ENCODE measurements at regions of chr3 and their contacts with region 1.

Region 1: DNA sequence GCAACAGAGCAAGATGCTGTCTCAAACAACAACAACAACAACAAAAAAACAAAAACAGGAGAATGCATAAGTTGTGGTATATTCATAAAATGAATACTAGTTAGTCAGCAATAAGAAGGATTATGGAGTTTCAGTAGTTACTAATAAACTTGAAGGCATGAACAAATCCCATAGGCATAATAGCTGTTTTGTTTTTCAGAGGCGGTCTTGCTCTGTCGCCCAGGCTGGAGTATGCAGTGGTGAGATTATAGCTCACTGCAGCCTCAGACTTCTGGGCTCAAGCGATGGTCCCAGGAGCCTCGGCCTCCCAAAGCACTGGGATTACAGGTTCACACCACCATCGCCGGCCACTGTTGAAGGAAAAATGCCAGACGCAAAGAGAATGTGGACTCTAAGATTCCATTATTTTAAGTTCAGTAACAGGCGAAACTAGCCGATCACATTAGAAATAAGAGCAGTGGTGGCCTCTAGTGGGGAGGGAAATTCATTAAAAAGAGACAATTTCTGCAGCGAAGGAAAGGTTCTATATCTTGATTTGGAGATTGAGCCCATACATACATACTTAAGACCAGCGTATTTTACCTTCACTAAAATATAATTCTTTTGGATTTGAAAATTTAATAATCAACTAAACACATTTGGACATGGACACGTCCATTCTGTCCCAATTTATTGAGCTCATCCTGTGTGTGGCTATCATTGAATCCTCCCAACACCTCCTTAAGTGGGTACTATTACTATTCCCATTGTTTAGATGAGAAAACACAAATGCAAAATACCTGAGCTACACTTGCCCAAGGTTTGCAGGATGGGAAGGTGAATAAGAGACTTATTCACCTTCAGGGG is 27.4 kb upstream of the HDAC11 start:
- DNase-seq: peak; percentile 85
- H3K4me3 Mint-ChIP-seq: peak overlapping the region; percentile 95
- H3K27ac Mint-ChIP-seq: peak overlapping the region; percentile 20
- H3K4me1 Mint-ChIP-seq: peaks cover 18% of the 10 kb centered on the region
- H3K27me3 Mint-ChIP-seq: no peaks in the 10 kb centered on the region

Region 2: GRCh38 chr3:12708584-12709192 is 744.0 kb before region 1 on chr3:
- intact Hi-C with region 1: no loop called
- DNase-seq: no peak
- H3K4me3 Mint-ChIP-seq: no peak overlapping the region
- H3K27ac Mint-ChIP-seq: no peak overlapping the region
- H3K4me1 Mint-ChIP-seq: no peaks in the 10 kb centered on the region
- H3K27me3 Mint-ChIP-seq: peaks cover 8% of the 10 kb centered on the region

Region 3: GRCh38 chr3:13091898-13092611 is 360.7 kb before region 1 on chr3:
- intact Hi-C with region 1: loop called (anchors 2 kb)
- DNase-seq: peak; percentile 94
- H3K4me3 Mint-ChIP-seq: no peak overlapping the region
- H3K27ac Mint-ChIP-seq: no peak overlapping the region
- H3K4me1 Mint-ChIP-seq: peaks cover 3% of the 10 kb centered on the region
- H3K27me3 Mint-ChIP-seq: peaks cover 13% of the 10 kb centered on the region

Region 4: GRCh38 chr3:13262493-13263211 is 190.1 kb before region 1 on chr3:
- intact Hi-C with region 1: no loop called
- DNase-seq: no peak
- H3K4me3 Mint-ChIP-seq: no peak overlapping the region
- H3K27ac Mint-ChIP-seq: no peak overlapping the region
- H3K4me1 Mint-ChIP-seq: peaks cover 7% of the 10 kb centered on the region
- H3K27me3 Mint-ChIP-seq: peaks cover 2% of the 10 kb centered on the region

Region 5: GRCh38 chr3:13346481-13347389 is 106.0 kb before region 1 on chr3:
- intact Hi-C with region 1: loop called (anchors 1 kb)
- DNase-seq: peak; percentile 91
- H3K4me3 Mint-ChIP-seq: peak overlapping the region; percentile 32
- H3K27ac Mint-ChIP-seq: peak overlapping the region; percentile 75
- H3K4me1 Mint-ChIP-seq: peaks cover 45% of the 10 kb centered on the region
- H3K27me3 Mint-ChIP-seq: no peaks in the 10 kb centered on the region

Region 6: DNA sequence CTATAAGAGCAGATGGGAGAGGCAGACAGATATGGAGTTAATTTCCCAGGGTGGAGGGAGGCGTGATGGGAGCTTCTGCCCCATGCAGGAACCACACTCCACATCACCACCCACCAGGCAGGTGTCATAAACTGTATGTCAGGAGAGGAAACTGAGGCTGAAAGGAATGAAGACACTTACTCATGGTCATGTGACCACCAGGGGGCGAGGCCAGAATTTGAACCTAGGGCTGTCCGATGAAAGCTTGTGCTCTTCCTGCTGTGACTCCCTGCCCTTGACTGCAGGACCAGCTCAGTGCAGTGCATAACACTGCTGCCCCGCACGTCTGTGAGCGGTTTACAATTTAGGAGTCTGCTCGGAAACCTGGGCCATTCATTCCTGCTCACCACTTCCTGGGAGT is 61.4 kb before region 1 on chr3:
- intact Hi-C with region 1: loop called (anchors 1 kb)
- DNase-seq: peak; percentile 66
- H3K4me3 Mint-ChIP-seq: no peak overlapping the region
- H3K27ac Mint-ChIP-seq: peak overlapping the region; percentile 51
- H3K4me1 Mint-ChIP-seq: peaks cover 6% of the 10 kb centered on the region
- H3K27me3 Mint-ChIP-seq: no peaks in the 10 kb centered on the region

Region 7: DNA sequence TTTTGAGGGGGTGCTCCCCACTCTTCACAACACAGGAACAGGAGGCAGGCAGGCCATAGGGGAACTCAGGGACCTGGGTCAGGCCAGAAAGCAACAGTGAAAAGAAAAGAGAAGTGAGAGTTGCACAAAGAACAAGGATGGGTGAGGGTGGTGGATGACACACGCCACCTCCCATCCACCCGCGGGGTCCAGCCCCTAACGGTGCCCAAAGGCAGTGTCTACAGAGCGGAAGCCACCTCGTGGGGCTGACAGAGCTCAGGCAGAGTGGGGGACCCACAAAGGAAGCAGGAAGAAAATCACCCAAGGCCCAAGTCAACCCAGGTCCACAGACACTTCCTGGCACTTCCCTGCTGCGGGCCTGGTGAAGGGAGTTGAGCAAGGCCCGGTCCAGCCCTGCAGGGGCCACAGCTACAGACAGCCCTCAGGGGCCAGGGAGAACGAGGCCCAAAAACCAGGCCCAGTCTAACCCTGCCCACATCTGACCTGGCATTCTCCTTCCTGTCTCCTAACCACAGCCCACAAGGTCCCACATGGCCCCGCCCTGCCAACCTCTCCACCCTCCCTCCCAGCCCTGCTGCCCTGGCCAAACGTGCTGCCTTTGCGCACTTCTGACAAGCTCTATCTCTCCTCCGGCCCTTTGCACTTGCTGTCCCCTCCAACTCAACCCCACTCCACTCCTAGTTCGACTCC is 38.5 kb before region 1 on chr3:
- intact Hi-C with region 1: loop called (anchors 1 kb)
- DNase-seq: peak; percentile 89
- H3K4me3 Mint-ChIP-seq: peak overlapping the region; percentile 81
- H3K27ac Mint-ChIP-seq: peak overlapping the region; percentile 87
- H3K4me1 Mint-ChIP-seq: peaks cover 48% of the 10 kb centered on the region
- H3K27me3 Mint-ChIP-seq: no peaks in the 10 kb centered on the region

Region 8: GRCh38 chr3:13419505-13420044 is 33.1 kb before region 1 on chr3:
- intact Hi-C with region 1: loop called (anchors 1 kb)
- DNase-seq: peak; percentile 89
- H3K4me3 Mint-ChIP-seq: peak overlapping the region; percentile 92
- H3K27ac Mint-ChIP-seq: peak overlapping the region; percentile 93
- H3K4me1 Mint-ChIP-seq: peaks cover 58% of the 10 kb centered on the region
- H3K27me3 Mint-ChIP-seq: peaks cover 3% of the 10 kb centered on the region

Region 9: GRCh38 chr3:13479581-13480339 is 27.0 kb after region 1 on chr3 and contains the start of gene HDAC11:
- intact Hi-C with region 1: loop called (anchors 1 kb)
- DNase-seq: peak; percentile 100
- H3K4me3 Mint-ChIP-seq: peak within 1 kb of the TSS; percentile 91
- H3K27ac Mint-ChIP-seq: peak within 1 kb of the TSS; percentile 88
- H3K4me1 Mint-ChIP-seq: peaks cover 8% of the 10 kb centered on the region
- H3K27me3 Mint-ChIP-seq: peaks cover 10% of the 10 kb centered on the region
- total RNA-seq, gene HDAC11: 1.5 and 2.1 TPM in 2 replicates

Region 10: DNA sequence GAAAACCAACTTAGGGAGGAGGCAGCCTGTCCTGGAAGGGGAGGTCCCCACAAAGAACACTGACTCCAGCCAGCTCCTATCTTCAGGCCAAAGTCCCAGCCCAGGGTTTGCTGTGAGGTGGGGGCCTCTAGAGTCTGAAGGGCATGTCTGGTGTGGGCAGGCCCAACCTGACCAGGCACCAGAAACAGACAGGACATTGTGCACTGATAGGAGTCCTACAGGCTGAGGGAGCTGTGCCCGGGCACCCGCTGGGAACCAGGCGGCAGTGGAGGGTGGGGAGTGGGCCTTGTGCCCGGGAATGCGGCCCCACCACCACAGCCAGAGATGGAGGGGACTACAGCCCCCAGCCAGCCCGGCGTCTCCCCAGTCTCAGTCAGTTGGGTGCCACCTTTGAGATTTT is 265.7 kb after region 1 on chr3:
- intact Hi-C with region 1: no loop called
- DNase-seq: peak; percentile 39
- H3K4me3 Mint-ChIP-seq: no peak overlapping the region
- H3K27ac Mint-ChIP-seq: no peak overlapping the region
- H3K4me1 Mint-ChIP-seq: no peaks in the 10 kb centered on the region
- H3K27me3 Mint-ChIP-seq: peaks cover 5% of the 10 kb centered on the region

Measured in activated CD4-positive, alpha-beta T cell treated with anti-CD3 and anti-CD28 coated beads, Interleukin-2, amount 10 ng/mL, durations not matched to agents 24 days and 14 days (primary cell).